ENCODE measurements at regions of chr7 and their contacts with region 1.

Region 1: GRCh38 chr7:27576360-27576944 is 86.2 kb downstream of the HIBADH start:
- DNase-seq: no peak
- ATAC-seq: peak; percentile 54

Region 2: DNA sequence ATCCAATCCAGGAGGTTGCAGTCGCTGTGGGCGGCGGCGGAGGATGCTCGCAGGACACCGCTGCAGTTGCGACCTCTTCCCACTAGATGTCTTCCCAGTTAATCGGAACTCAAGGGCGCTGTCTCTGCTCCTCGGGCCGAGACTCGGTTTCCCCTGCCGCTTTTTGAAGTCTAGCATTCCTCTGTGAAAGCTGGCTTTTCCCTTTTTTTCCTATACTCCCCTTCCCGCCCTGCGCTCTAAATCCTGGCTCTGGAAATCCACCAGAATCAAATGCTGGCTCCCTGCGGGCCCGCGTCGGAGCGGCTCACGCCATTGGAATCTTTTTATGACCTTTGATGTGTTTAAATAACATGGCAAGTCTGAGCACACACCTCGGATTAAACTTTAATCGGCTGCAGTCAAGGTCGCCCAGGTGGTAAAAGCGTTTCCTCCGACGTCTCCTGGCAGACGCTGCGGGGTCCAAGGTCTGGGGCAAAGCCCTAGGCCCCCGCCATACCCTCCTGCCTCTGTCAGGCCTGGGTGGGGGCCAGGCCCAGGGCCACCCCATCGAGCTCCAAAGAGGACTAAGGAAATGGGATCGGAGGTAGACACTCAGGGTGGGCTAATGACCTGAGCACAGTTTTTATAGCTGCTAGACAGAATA is 365.9 kb before region 1 on chr7:
- intact Hi-C with region 1: loop called (anchors 10 kb)
- DNase-seq: peak; percentile 63
- ATAC-seq: peak; percentile 68

Region 3: DNA sequence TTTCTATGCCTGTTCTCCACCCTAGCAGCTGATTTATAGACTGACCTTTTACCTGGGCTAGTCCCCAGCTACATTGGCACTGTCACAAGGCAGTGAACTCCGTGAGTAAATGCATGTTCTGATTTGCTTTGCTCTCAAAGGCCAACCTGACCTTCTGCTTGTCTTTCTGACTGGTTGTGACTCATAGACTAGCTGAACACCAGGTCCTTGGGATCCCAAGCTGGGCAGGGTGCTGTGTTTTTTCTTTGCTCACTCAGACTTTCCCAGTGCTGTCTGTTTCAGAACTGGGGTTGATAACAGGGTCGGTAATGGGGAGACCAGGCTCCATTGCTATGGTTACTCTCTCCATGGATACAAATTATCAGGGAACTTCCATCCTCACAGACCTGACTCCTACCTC is 298.8 kb before region 1 on chr7:
- intact Hi-C with region 1: no loop called
- DNase-seq: no peak
- ATAC-seq: no peak

Region 4: DNA sequence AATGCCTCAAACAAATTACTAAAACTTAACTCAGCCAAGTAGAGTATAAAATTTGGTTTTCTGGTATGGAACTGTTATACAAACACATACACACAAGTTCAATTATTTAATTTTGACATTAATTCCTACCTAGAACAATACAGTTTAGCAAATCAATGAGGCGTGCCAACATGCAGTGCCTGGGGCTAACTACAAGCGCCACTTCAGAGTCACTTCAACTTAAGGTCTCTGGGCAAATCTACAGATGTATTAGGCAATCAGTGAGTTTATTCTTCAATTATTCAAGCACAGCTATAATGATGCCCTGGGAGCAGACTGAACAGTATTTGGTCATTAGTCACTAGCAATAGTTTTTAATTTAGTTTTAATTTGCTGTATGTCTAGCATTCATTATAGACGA is 34.6 kb after region 1 on chr7:
- intact Hi-C with region 1: no loop called
- DNase-seq: no peak
- ATAC-seq: no peak